ENCODE measurements at regions of chr11 and their contacts with region 1.

Region 1: GRCh38 chr11:16785520-16786128 is 47.2 kb downstream of the C11orf58 start:
- ATAC-seq: peak; percentile 69 to 91 (median 81)
- H3K4me3 ChIP-seq: no peak overlapping the region
- H3K27ac ChIP-seq: no peak overlapping the region
- H3K4me1 ChIP-seq: peaks cover 0 to 9% of the 10 kb centered on the region in 2 donors

Region 2: GRCh38 chr11:16070573-16070972 is 715.1 kb before region 1 on chr11:
- in situ Hi-C with region 1: no loop called
- ATAC-seq: no peak
- H3K4me3 ChIP-seq: no peak overlapping the region
- H3K27ac ChIP-seq: no peak overlapping the region
- H3K4me1 ChIP-seq: no peaks in the 10 kb centered on the region

Region 3: DNA sequence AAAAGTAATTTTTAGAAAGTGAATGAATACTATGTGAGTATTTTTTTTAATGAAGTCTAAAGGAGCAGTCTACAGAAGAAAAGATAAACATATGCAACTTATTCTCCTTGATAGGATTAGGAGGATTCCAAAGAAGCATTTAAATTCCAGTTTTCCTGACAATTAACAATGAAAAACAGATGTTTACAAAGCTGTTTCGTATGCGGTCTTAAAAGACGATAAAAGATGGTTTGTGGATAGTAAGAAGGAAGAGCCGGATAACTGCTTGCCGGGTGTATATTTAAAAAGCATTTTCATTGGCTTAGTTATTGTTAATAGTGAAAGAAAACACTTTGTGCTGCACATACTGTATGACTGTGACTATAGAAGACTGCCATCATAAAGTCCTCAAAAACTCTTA is 167.2 kb before region 1 on chr11:
- in situ Hi-C with region 1: no loop called
- ATAC-seq: no peak
- H3K4me3 ChIP-seq: no peak overlapping the region
- H3K27ac ChIP-seq: no peak overlapping the region
- H3K4me1 ChIP-seq: no peaks in the 10 kb centered on the region

Region 4: GRCh38 chr11:16632295-16633200 is 153.1 kb before region 1 on chr11:
- in situ Hi-C with region 1: loop called in 1 of 9 experiments (anchors 25 kb)
- ATAC-seq: peak in 3 of 8 experiments; percentile 85 to 94 (median 90)
- H3K4me3 ChIP-seq: no peak overlapping the region
- H3K27ac ChIP-seq: no peak overlapping the region
- H3K4me1 ChIP-seq: no peaks in the 10 kb centered on the region

Region 5: DNA sequence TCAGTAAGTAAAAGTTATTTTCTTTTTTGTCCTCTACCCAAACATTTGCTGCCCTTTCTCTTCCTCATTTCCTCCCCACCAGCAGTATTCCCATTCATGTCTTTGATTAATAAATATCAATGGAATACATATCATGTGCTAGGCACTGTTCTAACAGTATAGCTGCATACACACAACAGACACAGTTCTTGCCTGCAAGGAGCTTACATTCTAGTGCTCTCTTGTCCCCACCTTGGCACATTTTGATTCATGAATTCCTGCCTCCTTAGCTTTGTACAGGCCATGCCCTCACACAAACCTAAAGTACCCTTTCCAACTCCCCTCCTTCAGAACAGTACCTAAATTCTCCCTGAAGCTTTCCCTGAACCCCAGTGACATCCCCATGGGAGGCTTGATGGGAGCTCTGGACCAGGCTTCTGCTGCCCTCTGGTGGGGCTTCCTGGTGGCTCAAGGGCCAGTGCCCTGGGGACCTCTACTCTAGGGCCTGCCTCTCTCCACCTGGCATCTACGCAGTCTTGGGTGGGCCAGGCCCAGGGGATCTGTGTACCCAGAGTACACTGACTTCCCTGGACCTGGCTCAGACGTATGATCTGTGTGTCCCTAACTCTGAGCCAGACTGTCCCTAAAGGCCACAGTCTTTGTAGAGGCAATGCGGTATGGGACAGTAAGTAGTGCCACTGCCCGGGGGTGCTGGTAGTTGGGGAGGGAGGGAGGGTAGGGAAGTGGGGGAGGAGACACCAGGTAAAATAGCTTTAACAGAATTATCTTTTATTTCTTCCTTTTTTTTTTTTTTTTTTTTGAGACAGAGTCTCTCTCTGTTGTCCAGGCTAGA is 277.8 kb after region 1 on chr11:
- in situ Hi-C with region 1: loop called in 2 of 9 experiments (anchors 10 to 25 kb)
- ATAC-seq: peak in 6 of 8 experiments; percentile 20 to 98 (median 84)
- H3K4me3 ChIP-seq: no peak overlapping the region
- H3K27ac ChIP-seq: no peak overlapping the region
- H3K4me1 ChIP-seq: no peaks in the 10 kb centered on the region

Region 6: GRCh38 chr11:17077520-17078401 is 292.1 kb after region 1 on chr11 and contains the start of gene RPS13:
- in situ Hi-C with region 1: loop called in 2 of 9 experiments (anchors 25 kb)
- ATAC-seq: peak; percentile 87 to 97 (median 96)
- H3K4me3 ChIP-seq: peak within 1 kb of the TSS; percentile 72 to 89 (median 86)
- H3K27ac ChIP-seq: peak within 1 kb of the TSS; percentile 92 to 96
- H3K4me1 ChIP-seq: peaks cover 12 to 18% of the 10 kb centered on the region in 2 donors
- total RNA-seq, gene RPS13: 899 to 2,683 (median 1,773) TPM